ENCODE measurements at regions of chr7 and their contacts with region 1.

Region 1: GRCh38 chr7:100215895-100216294 is 3.9 kb upstream of the PVRIG start:
- DNase-seq: no peak
- H3K4me3 ChIP-seq: no peak overlapping the region
- H3K27ac ChIP-seq: no peak overlapping the region
- H3K4me1 ChIP-seq: peaks cover 4% of the 10 kb centered on the region
- H3K27me3 ChIP-seq: no peaks in the 10 kb centered on the region
- CTCF ChIP-seq: no peak
- POLR2A ChIP-seq: no peak

Region 2: DNA sequence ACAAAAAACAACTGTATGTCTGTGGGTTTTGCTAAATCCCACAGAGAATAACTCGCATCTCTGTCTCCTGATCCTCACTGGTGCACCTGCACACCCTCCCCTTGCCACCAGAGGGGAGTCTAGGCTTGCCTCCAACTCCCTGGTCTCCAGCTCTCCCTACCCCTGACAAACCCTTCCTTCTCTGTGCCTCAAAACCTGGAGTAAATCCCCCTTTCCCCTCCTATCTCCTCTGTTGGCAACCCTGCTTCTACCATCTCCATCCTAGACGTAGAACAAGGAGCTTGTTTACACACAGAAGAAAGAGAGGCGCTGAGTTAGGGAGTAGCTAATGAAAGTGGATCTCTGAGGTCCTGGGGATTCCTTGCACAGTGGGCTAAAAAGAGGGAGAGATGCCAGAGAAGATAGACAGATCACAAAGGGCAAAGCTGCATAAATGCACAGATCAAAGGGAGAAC is 83.2 kb before region 1 on chr7:
- intact Hi-C with region 1: loop called (anchors 10 kb)
- DNase-seq: no peak
- H3K4me3 ChIP-seq: no peak overlapping the region
- H3K27ac ChIP-seq: no peak overlapping the region
- H3K4me1 ChIP-seq: peaks cover 21% of the 10 kb centered on the region
- H3K27me3 ChIP-seq: no peaks in the 10 kb centered on the region
- CTCF ChIP-seq: peak; percentile 35 to 73 (median 51)
- POLR2A ChIP-seq: no peak

Measured in vagina (tissue), 2 donors.